Spleen (tissue), 13 donors: ENCODE measurements at regions of chr13 and their contacts with region 1.

Region 1: GRCh38 chr13:110944121-110944967 is 29.5 kb upstream of the ANKRD10 start:
- DNase-seq: no peak
- H3K4me3 ChIP-seq: no peak overlapping the region
- H3K27ac ChIP-seq: peak overlapping the region in 2 of 8 donors; percentile 11 to 18
- H3K4me1 ChIP-seq: peaks cover 0 to 23% (median 6%) of the 10 kb centered on the region in 6 donors
- H3K27me3 ChIP-seq: no peaks in the 10 kb centered on the region
- CTCF ChIP-seq: peak in 8 of 11 experiments; percentile 29 to 63 (median 48)
- POLR2A ChIP-seq: no peak

Region 2: DNA sequence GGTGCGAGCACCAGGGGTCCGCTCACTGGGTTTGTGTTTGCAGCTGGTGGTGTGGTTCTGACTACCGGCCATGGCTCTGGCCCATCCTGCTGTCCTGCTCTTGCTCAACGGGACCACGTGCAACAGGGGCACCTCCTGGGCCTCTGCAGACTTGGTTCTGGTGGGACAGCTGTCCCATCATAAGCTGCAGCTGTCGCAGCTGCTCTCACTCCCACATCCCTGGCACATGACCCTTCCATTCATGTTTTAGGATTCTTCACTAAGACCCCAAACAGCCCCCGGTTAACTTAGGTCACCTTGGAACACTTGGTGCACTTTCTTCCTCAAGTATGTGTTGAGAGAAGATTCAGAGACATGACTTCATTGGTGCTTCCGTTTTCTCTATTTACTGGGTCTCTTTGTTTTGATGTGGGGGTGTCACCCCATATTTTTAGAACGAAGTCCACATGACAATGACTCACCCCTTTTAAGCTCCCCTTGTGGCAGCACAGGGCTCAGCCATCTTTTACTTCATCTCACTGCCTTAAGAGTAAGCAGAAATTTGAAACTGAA is 102.3 kb after region 1 on chr13:
- intact Hi-C with region 1: loop called (anchors 10 kb)
- DNase-seq: no peak
- H3K4me3 ChIP-seq: no peak overlapping the region
- H3K27ac ChIP-seq: peak overlapping the region in 1 of 8 donors; percentile 51
- H3K4me1 ChIP-seq: peaks cover 0 to 24% (median 0%) of the 10 kb centered on the region in 6 donors
- H3K27me3 ChIP-seq: peaks cover 0 to 6% (median 0%) of the 10 kb centered on the region in 7 donors
- CTCF ChIP-seq: peak in 3 of 11 experiments; percentile 15 to 34 (median 30)
- POLR2A ChIP-seq: no peak